ENCODE measurements at regions of chr1 and their contacts with region 1.

Region 1: GRCh38 chr1:217681806-217682205 is 50.7 kb downstream of the SPATA17 start:
- DNase-seq: no peak
- H3K4me3 ChIP-seq: no peak overlapping the region
- H3K27ac ChIP-seq: no peak overlapping the region
- H3K4me1 ChIP-seq: no peaks in the 10 kb centered on the region
- H3K27me3 ChIP-seq: no peaks in the 10 kb centered on the region
- CTCF ChIP-seq: no peak

Region 2: DNA sequence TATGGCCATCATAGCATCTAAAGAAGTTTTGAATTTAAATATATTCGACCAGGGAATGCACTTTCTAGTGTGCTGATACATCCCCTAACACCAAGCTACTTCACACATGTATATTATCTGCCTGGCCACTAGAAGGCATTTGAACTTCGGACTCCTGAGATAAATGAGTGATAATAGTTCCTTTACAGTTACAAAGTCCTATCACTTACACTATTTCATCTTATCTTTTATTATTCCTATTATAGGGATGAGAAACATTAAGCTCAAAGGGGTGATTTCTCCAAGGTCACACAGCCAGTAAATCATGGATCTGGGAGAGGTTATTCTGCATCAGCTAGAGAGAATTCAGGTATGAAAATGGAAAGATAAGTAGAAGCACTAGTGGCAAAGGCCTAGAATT is 91.2 kb before region 1 on chr1:
- CTCF ChIA-PET with region 1: no interaction called
- dilution Hi-C with region 1: no loop called
- in situ Hi-C with region 1: no loop called
- intact Hi-C with region 1: no loop called
- DNase-seq: no peak
- H3K4me3 ChIP-seq: no peak overlapping the region
- H3K27ac ChIP-seq: no peak overlapping the region
- H3K4me1 ChIP-seq: no peaks in the 10 kb centered on the region
- H3K27me3 ChIP-seq: no peaks in the 10 kb centered on the region
- CTCF ChIP-seq: no peak

Region 3: GRCh38 chr1:217953922-217954321 is 272.1 kb after region 1 on chr1:
- CTCF ChIA-PET with region 1: no interaction called
- dilution Hi-C with region 1: no loop called
- in situ Hi-C with region 1: no loop called
- intact Hi-C with region 1: loop called (anchors 5 kb)
- DNase-seq: peak; percentile 83
- H3K4me3 ChIP-seq: no peak overlapping the region
- H3K27ac ChIP-seq: no peak overlapping the region
- H3K4me1 ChIP-seq: no peaks in the 10 kb centered on the region
- H3K27me3 ChIP-seq: no peaks in the 10 kb centered on the region
- CTCF ChIP-seq: no peak

Measured in mammary epithelial cell (primary cell).